ENCODE measurements at regions of chr17 and their contacts with region 1.

Region 1: DNA sequence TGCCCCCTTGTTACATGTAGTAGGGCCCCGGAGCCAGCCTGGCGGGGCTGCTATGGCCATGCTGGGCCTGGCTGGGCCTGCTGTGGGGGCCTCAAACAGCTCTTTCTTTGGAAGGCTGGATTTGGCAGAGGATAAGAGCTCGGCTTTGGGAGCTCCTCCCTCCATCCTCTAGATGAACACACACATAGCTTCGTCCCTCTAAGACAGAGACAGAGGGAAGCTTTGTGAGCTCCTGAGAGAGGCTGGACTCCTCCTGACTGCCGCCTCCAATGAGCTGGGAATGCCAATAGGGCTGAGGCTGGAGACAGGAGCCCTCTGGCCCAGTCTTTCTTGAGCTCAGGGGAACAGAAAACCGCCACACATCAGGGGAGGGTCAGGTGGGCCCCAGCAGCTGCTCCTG is 37.3 kb upstream of the CDC42EP4 start:
- DNase-seq: no peak
- H3K4me3 ChIP-seq: no peak overlapping the region
- H3K27ac ChIP-seq: no peak overlapping the region
- H3K4me1 ChIP-seq: no peaks in the 10 kb centered on the region
- H3K27me3 ChIP-seq: no peaks in the 10 kb centered on the region
- CTCF ChIP-seq: no peak

Region 2: DNA sequence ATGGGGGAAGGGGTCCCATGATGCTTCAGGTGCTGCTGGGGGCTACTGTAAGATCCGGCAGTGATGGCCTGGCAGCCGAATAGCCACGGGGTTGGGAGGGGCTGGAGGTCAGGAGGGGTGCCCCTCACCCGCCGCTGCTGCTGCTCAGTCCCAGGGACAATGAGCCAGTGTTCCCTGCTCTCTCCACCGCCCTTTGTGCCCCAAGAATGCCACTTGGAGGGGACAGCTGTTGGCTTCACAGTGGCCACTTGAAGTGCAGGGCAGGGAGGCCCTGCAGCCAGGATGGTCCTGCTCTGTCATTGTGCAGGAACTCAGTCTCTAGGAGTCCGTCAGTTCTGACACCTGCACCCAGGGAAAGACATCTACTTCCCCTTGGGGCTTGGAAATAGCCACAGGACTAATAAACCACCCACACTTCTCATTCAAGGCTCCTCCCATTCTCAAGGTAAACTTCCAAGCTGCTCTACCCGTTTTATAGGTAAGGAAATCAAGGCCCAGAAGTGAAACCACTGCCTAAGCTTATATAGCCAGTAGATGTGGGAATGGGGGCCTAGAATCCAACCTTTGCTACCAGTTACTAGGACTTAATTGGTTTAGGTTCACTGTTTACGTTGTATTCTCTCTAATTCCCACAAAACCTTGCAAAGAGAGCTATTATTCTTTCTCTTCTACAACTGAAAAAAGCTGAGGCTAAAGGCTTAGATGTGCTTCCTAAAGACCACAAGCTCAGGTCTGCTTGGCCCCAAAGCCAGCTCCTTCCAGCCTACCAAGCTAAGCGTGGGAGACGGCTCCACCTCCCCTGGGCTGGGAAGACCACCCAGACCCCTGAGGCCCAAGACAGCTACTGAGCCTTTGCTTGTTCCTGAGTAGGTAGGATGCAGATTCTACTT is 81.2 kb before region 1 on chr17:
- dilution Hi-C with region 1: loop called (anchors 5 kb)
- DNase-seq: no peak
- H3K4me3 ChIP-seq: no peak overlapping the region
- H3K27ac ChIP-seq: no peak overlapping the region
- H3K4me1 ChIP-seq: peaks cover 6% of the 10 kb centered on the region
- H3K27me3 ChIP-seq: no peaks in the 10 kb centered on the region
- CTCF ChIP-seq: no peak

Measured in keratinocyte (primary cell).